Common myeloid progenitor, CD34-positive (primary cell): ENCODE measurements at regions of chr17 and their contacts with region 1.

Region 1: DNA sequence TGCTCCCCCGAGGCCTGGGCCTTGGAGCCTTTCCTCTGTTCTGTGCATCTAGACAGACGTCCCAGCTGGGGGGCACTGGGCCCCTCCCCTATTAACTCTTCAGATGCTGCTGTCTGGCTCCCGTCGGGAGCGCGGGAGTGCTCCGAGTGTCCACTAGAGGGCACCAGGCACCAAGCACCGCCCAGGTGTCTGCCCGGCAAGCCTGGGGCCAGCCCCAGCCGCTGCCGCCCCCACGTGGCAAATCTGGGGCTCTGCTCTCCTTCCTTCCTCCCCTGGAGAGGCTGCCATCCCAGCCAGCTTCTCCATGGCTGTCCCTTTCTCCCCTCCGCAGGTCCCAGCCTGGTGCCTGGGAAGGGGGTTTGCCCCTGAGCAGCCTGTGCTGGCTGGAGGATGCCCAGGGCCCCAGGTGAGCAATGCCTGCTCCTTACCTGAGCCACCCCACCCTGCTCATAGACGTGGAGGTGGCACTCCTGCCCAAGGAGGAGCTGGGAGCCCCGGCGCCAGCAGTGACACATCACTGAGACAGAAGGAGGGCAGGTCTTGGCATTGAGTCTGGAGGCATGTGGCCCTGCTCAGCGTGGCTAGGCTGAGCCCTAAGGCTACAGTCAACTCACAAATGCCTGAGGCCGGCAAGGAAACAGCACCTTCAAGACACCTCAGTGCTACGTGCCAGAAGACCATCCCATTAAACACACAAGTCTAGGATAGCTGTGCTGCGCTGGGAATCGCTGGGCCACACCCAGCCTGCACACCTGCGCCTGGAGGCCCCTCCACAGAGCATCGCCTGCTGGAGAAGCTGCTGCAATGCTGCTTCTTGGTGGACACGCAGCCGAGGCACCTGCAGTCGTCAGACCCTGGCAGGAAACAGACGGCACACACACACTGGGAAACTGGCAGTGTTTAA is 19.7 kb downstream of the TMEM235 start:
- DNase-seq: peak; percentile 84 to 89 (median 86)
- H3K4me3 ChIP-seq: peak overlapping the region in 3 of 7 experiments; percentile 42 to 64 (median 43)
- H3K27ac ChIP-seq: no peak overlapping the region
- H3K4me1 ChIP-seq: peaks cover 8 to 67% (median 59%) of the 10 kb centered on the region in 4 experiments
- H3K27me3 ChIP-seq: no peaks in the 10 kb centered on the region

Region 2: GRCh38 chr17:78040440-78041385 is 210.4 kb before region 1 on chr17:
- CTCF ChIA-PET with region 1: no interaction called
- POLR2A ChIA-PET with region 1: no interaction called
- DNase-seq: peak; percentile 53 to 75 (median 59)
- H3K4me3 ChIP-seq: peak overlapping the region; percentile 16 to 74 (median 46)
- H3K27ac ChIP-seq: peak overlapping the region; percentile 48 to 68
- H3K4me1 ChIP-seq: peaks cover 0 to 2% (median 0%) of the 10 kb centered on the region in 4 experiments
- H3K27me3 ChIP-seq: no peaks in the 10 kb centered on the region

Region 3: DNA sequence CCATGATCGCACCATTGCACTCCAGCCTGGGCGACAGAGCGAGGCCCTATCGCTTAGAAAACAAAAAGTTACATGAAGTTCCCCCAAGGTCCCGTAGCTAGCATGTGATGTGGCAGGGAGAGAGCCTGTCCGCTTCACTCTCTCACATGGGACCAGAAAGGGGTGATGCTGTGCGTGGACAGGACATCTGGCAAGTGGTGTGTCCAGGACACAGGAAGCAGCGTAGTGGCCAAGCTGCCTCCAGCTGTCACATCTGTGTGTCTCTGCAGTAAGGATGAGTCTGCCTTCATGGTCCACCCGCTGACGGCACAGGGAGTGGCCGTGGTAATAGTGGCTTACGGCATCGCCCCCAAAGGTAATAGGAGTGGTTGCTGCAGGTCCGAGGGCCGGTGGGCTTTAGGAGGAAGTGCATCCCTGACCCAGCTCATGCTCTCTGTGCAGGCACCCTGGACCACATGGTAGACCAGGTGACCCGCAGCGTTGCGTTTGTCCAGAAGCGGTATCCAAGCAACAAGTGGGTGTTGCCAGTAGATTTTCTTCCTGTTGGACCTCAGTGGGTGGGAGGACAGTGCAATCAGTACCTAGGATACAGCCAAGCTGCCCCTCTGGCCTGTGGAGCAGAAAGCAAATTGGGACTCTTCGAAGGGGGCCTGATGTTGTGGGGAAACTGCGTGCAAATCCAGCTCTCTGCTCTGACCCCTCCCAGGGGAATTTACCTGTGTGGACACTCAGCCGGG is 46.6 kb before region 1 on chr17:
- CTCF ChIA-PET with region 1: interaction called, 12 read pairs
- POLR2A ChIA-PET with region 1: no interaction called
- DNase-seq: no peak
- H3K4me3 ChIP-seq: no peak overlapping the region
- H3K27ac ChIP-seq: no peak overlapping the region
- H3K4me1 ChIP-seq: no peaks in the 10 kb centered on the region
- H3K27me3 ChIP-seq: no peaks in the 10 kb centered on the region

Region 4: GRCh38 chr17:78237401-78238012 is 13.6 kb before region 1 on chr17:
- CTCF ChIA-PET with region 1: interaction called, 29 read pairs
- POLR2A ChIA-PET with region 1: interaction called, 3 read pairs
- DNase-seq: no peak
- H3K4me3 ChIP-seq: no peak overlapping the region
- H3K27ac ChIP-seq: no peak overlapping the region
- H3K4me1 ChIP-seq: peaks cover 0 to 20% (median 15%) of the 10 kb centered on the region in 4 experiments
- H3K27me3 ChIP-seq: peaks cover 0 to 7% (median 6%) of the 10 kb centered on the region in 5 experiments

Region 5: GRCh38 chr17:78365561-78366108 is 114.5 kb after region 1 on chr17:
- CTCF ChIA-PET with region 1: interaction called, 19 read pairs
- POLR2A ChIA-PET with region 1: interaction called, 3 read pairs
- DNase-seq: no peak
- H3K4me3 ChIP-seq: no peak overlapping the region
- H3K27ac ChIP-seq: no peak overlapping the region
- H3K4me1 ChIP-seq: peaks cover 0 to 38% (median 30%) of the 10 kb centered on the region in 4 experiments
- H3K27me3 ChIP-seq: no peaks in the 10 kb centered on the region

Region 6: GRCh38 chr17:78450696-78451345 is 199.7 kb after region 1 on chr17:
- CTCF ChIA-PET with region 1: no interaction called
- POLR2A ChIA-PET with region 1: no interaction called
- DNase-seq: peak; percentile 43 to 72 (median 61)
- H3K4me3 ChIP-seq: no peak overlapping the region
- H3K27ac ChIP-seq: no peak overlapping the region
- H3K4me1 ChIP-seq: peaks cover 0 to 14% (median 11%) of the 10 kb centered on the region in 4 experiments
- H3K27me3 ChIP-seq: no peaks in the 10 kb centered on the region

Region 7: GRCh38 chr17:78467049-78467715 is 216.0 kb after region 1 on chr17:
- CTCF ChIA-PET with region 1: no interaction called
- POLR2A ChIA-PET with region 1: no interaction called
- DNase-seq: no peak
- H3K4me3 ChIP-seq: no peak overlapping the region
- H3K27ac ChIP-seq: no peak overlapping the region
- H3K4me1 ChIP-seq: no peaks in the 10 kb centered on the region
- H3K27me3 ChIP-seq: no peaks in the 10 kb centered on the region